ENCODE measurements at regions of chr15 and their contacts with region 1.

Region 1: DNA sequence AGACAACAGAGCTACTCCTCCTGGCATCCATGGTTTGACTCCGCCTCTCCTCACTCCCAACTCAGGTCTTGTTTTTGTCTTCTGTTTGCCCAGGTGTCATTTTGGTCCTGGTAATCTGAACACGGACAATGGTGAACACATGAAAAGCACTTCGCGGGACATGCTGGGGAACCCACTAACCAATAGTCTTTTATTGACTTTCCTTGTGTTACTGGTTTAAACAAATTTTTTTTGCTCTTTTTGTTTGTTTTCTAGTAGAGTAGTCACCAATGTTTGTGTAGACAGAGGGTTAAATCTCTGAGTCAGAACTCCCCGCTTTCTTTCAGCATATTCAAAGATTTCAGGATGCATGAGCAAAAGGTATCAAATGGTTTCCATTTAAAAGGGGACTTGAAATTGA is 38.3 kb downstream of the LARP6 start:
- DNase-seq: no peak
- ATAC-seq: no peak
- H3K4me3 ChIP-seq: no peak overlapping the region
- H3K4me1 ChIP-seq: peaks cover 2% of the 10 kb centered on the region
- CTCF ChIP-seq: no peak

Region 2: DNA sequence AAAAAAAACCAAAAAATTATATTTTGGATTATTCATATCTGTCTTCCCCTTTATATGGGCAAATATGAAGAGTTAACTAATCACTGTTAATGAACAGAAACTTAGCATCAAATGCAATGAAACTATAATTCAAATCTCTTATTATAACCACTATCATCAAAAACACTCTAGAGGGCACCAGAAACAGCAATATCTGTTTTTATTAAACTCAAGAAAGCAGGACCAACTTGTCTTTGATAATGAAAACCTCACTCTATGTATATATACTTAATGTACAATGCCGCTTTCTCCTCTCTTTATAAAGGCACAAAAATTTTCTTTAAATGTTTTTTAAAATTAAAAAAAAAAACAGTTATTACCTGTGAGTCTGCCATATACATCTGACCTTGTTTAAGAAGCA is 145.0 kb before region 1 on chr15:
- intact Hi-C with region 1: loop called in 1 of 2 experiments (anchors 10 kb)
- DNase-seq: no peak
- ATAC-seq: no peak
- H3K4me3 ChIP-seq: no peak overlapping the region
- H3K4me1 ChIP-seq: peaks cover 19% of the 10 kb centered on the region
- CTCF ChIP-seq: no peak

Region 3: GRCh38 chr15:70679919-70680231 is 135.8 kb before region 1 on chr15:
- intact Hi-C with region 1: loop called (anchors 5 to 10 kb)
- DNase-seq: no peak
- ATAC-seq: no peak
- H3K4me3 ChIP-seq: no peak overlapping the region
- H3K4me1 ChIP-seq: no peaks in the 10 kb centered on the region
- CTCF ChIP-seq: no peak

Measured in mucosa of descending colon (tissue), 3 donors.